ENCODE measurements at regions of chr11 and their contacts with region 1.

Region 1: GRCh38 chr11:45110562-45110961 is 35.9 kb upstream of the PRDM11 start:
- DNase-seq: peak; percentile 71
- CTCF ChIP-seq: peak; percentile 60

Region 2: GRCh38 chr11:44964526-44965209 is 145.9 kb before region 1 on chr11:
- in situ Hi-C with region 1: no loop called
- DNase-seq: no peak
- CTCF ChIP-seq: no peak

Region 3: GRCh38 chr11:45298718-45299117 is 188.2 kb after region 1 on chr11:
- in situ Hi-C with region 1: loop called (anchors 10 kb)
- DNase-seq: no peak
- CTCF ChIP-seq: no peak

Region 4: GRCh38 chr11:45322891-45323600 is 212.5 kb after region 1 on chr11:
- in situ Hi-C with region 1: loop called (anchors 10 kb)
- DNase-seq: no peak
- CTCF ChIP-seq: no peak

Measured in GM13976 (cell line).